PC-3 (cell line): ENCODE measurements at regions of chrX and their contacts with region 1.

Region 1: GRCh38 chrX:73758250-73758649 is 195.3 kb downstream of the CHIC1 start:
- DNase-seq: peak; percentile 6
- ATAC-seq: no peak
- H3K4me3 ChIP-seq: no peak overlapping the region
- H3K27ac ChIP-seq: no peak overlapping the region
- H3K4me1 ChIP-seq: peaks cover 6% of the 10 kb centered on the region; the same call in 1 of the 2 replicates
- H3K27me3 ChIP-seq: no peaks in the 10 kb centered on the region
- CTCF ChIP-seq: no peak

Region 2: DNA sequence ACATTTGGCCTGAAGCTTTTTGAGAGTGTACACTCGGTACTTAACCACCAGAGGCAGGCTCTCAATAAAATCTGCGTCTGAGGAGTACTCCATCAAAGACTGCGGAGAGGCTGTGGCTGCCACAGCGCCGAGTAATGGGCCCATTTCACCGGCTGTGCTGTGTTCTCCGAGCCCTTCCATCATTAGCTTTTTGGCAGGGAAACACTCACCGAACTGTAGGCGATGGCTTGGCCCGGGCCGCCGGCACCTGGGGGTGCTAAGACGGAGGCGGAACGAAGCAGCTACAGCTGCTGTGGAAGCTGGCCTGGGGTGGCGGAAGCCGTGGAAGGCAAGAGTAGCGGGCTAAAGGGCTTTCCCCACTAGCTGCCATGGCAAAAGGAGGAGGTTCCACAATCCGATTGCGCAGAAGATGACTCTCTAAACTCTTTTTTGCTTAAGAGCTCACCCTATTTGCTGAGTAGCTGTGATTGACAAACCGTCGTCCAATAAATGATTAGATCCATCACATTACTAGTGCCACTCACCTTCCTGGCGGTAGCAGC is 630.5 kb before region 1 on chrX:
- CTCF ChIA-PET with region 1: interaction called, 10 read pairs
- POLR2A ChIA-PET with region 1: no interaction called
- intact Hi-C with region 1: no loop called
- DNase-seq: peak; percentile 51
- ATAC-seq: peak; percentile 74
- H3K4me3 ChIP-seq: peak overlapping the region; percentile 65
- H3K27ac ChIP-seq: no peak overlapping the region
- H3K4me1 ChIP-seq: no peaks in the 10 kb centered on the region
- H3K27me3 ChIP-seq: no peaks in the 10 kb centered on the region
- CTCF ChIP-seq: peak; percentile 49